ENCODE measurements at regions of chr20 and their contacts with region 1.

Region 1: DNA sequence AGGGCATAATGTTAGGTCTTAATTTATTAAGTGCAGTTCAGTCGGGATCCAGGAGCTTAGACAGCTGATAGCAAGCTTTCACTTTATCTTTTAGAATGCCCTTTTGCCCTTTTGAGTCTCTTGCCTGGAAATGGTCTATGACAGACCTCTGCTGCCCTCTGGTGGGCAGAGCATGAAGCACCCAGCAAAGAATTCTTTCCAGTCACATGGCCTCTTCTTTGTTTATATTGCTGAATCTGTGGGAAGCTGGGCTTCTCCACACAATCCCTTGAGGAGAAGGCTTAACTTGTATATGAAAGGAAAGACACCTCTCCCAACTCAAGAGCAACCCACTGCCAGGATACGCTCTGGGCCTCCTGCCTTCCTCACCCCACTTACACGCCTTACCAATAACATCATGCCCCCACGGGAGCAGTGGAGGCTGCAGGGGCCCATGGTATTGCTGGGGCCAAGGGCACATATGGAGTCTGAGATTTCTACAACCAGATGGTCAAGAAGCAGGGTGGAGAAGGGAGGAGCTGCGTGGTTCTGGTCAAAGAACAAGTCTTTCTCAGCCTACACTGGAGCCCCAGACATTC is 20.4 kb downstream of the WFDC3 start:
- DNase-seq: peak; percentile 80 to 90
- ATAC-seq: peak; percentile 91
- H3K4me3 ChIP-seq: no peak overlapping the region
- H3K27ac ChIP-seq: no peak overlapping the region
- H3K4me1 ChIP-seq: no peaks in the 10 kb centered on the region
- H3K27me3 ChIP-seq: no peaks in the 10 kb centered on the region

Region 2: DNA sequence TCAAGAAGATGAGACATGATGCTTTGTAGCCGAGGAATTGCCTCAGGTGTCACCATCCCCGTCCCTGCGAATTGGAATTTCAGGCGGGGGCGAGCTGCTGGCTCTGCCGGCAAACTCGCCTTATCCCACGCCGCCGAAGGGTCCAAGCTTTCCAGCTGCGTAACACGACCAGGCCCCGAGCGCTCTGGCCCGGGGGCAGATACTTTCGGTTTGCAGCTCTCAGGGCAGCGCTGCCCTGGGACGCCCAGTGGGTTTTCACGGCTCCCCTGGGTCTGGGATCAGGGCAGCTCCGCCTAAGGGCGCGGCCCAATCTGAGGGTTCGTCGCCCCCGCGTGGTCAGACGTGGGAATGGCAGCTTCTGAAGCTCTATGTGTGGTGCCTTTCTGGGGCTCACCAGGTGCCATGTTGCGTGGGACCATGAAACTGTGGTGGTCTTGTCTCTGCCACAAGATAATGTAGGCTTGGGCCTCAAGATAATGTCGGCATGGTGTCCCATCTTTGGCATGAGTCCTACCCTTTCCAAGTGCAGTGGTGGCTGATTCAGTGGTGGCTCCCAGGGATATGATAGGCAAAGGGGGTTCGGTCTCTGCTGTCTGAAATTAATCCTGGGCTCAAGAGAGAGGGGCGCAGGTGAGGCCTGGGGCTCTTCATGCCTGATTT is 334.4 kb before region 1 on chr20:
- intact Hi-C with region 1: loop called (anchors 5 to 10 kb)
- DNase-seq: peak; percentile 93 to 97
- ATAC-seq: peak; percentile 97
- H3K4me3 ChIP-seq: peak overlapping the region; percentile 46 to 55
- H3K27ac ChIP-seq: peak overlapping the region in 1 of 2 donors; percentile 64
- H3K4me1 ChIP-seq: no peaks in the 10 kb centered on the region
- H3K27me3 ChIP-seq: no peaks in the 10 kb centered on the region

Region 3: GRCh38 chr20:45450097-45450818 is 321.0 kb before region 1 on chr20:
- intact Hi-C with region 1: loop called in 1 of 2 experiments (anchors 10 kb)
- DNase-seq: no peak
- ATAC-seq: no peak
- H3K4me3 ChIP-seq: no peak overlapping the region
- H3K27ac ChIP-seq: no peak overlapping the region
- H3K4me1 ChIP-seq: no peaks in the 10 kb centered on the region
- H3K27me3 ChIP-seq: no peaks in the 10 kb centered on the region

Region 4: DNA sequence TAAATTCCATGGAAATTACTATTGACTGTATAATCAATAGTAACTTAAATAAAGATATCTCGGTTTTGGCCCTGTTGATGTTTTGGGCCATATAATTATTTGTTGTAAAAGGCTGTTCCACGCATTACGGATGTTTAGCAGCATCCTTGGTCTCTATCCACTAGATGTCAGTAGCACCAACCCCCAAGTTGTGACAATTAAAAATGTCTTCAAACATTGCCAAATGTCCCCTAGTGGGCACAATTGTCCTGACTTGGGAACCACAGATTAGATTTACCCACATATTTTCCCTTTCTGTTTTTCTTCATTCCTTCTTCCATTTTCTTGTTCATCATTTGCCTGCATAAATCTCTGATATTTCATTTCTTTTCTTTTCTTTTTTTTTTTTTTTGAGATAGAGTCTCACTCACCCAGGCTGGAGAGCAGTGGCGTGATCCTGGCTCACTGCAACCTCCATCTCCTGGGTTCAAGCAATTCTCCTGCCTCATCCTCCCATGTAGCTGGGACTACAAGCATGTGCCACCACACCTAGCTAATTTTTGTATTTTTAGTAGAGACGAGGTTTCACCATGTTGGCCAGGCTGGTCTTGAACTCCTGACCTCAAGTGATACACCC is 178.6 kb before region 1 on chr20:
- intact Hi-C with region 1: no loop called
- DNase-seq: no peak
- ATAC-seq: no peak
- H3K4me3 ChIP-seq: no peak overlapping the region
- H3K27ac ChIP-seq: no peak overlapping the region
- H3K4me1 ChIP-seq: no peaks in the 10 kb centered on the region
- H3K27me3 ChIP-seq: no peaks in the 10 kb centered on the region

Region 5: GRCh38 chr20:45758068-45758467 is 13.2 kb before region 1 on chr20:
- intact Hi-C with region 1: no loop called
- DNase-seq: no peak
- ATAC-seq: no peak
- H3K4me3 ChIP-seq: no peak overlapping the region
- H3K27ac ChIP-seq: no peak overlapping the region
- H3K4me1 ChIP-seq: no peaks in the 10 kb centered on the region
- H3K27me3 ChIP-seq: no peaks in the 10 kb centered on the region

Measured in aorta (tissue), 5 donors.